IMR-90 (cell line): ENCODE measurements at regions of chr9 and their contacts with region 1.

Region 1: DNA sequence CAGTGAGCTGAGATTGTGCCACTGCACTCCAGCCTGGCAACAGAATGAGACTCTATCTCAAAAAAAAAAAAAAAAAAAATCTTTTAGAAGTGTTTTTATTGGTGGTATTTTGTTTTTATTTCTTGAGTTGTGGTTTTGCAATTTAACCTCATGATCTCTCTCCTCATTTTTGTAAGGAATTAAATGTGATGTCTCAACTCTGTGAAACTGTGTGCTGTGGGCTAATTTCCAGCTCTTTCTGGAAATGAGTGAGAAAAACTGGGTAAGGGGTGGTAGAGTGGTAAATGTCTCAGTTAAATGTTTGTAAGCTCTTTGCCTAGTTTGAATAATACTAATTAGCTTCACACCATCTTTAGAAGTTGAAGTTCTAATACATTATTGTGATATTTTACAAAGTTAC is 29.0 kb downstream of the ACO1 start:
- DNase-seq: no peak
- ATAC-seq: peak; percentile 27
- H3K4me3 ChIP-seq: no peak overlapping the region
- H3K27ac ChIP-seq: peak overlapping the region; percentile 53; the same call in 1 of the 2 replicates
- H3K4me1 ChIP-seq: no peaks in the 10 kb centered on the region; the same call in 1 of the 2 replicates
- H3K27me3 ChIP-seq: no peaks in the 10 kb centered on the region
- CTCF ChIP-seq: no peak
- POLR2A ChIP-seq: no peak
- RAD21 ChIP-seq: no peak

Region 2: DNA sequence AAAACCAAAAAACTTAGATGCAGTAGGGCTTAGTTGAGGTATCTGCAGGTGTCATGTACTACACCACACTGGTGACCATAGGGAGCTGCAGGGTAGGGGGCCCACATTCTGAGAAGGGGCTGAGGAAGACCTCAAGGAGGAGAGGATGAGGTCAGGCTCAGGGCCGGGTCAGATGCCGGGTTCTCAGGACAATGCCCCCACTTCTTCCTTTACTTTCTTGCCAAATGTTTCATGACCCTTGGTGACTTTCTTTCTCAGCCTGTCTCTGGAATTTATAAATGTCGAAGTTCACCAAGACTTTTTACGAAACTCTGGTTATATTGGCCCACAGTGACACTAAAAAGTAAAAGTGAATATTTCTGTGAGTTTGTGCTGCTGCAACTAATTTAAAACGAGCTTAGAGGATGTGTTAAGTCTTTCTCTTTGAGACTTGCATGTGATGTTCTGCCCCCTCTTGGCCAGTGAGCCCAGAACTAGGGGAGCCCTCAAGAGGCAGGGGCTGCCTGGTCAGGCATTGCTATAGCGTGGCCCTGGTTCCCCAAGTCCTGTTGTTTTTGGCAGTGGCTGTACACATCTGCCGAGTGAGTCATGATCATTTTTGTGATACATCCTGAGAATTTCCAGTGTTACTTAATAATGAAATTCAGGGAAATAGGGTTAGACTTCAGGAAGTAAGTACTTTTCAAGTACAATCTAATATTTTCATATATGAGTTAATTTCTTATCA is 17.8 kb before region 1 on chr9:
- CTCF ChIA-PET with region 1: no interaction called
- POLR2A ChIA-PET with region 1: no interaction called
- dilution Hi-C with region 1: no loop called
- in situ Hi-C with region 1: no loop called
- intact Hi-C with region 1: loop called (anchors 2 kb)
- DNase-seq: peak; percentile 98
- ATAC-seq: peak; percentile 87
- H3K4me3 ChIP-seq: no peak overlapping the region
- H3K27ac ChIP-seq: peak overlapping the region; percentile 100
- H3K4me1 ChIP-seq: peaks cover 36% of the 10 kb centered on the region
- H3K27me3 ChIP-seq: no peaks in the 10 kb centered on the region
- CTCF ChIP-seq: peak; percentile 47
- POLR2A ChIP-seq: no peak
- RAD21 ChIP-seq: peak; percentile 40